Activated CD4-positive, alpha-beta memory T cell treated with anti-CD3 and anti-CD28 coated beads for 36 hours (primary cell): ENCODE measurements at regions of chr6 and their contacts with region 1.

Region 1: DNA sequence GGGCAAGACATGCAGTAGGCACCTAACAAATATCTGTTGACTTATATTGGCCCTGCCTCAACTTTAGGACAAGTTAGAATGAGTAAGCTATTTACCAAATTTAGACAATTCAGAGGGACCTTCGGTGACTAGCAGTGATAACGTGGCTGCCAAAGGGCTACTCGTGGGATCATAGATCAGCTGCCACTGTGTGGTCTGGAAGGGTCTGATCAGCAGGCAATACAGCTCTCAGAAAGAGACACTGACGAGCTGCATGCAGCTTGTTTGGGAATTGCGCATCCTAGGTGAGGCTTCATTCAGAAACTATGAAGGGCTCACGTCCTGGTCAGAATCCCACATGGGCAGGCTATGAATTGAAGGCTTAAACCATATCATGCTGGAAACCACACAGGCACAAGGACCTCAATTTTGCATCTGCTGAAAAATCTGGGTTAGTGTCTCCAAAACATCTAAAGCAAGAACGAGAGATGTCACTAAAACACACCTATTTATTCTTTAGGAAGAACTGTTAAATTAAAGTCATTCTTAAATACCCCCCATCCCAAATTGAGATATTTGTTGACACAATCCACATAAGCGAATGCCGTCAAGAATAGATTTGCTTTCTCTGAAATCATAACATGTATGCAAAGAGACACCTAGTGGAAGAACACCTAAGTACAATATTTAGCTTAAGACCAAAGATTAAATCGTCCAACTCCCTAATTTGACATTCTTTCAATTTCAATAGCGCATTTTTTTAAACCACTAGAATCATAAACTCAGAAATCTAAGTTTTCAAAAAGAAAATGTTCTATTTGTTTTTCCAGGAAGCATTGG is 79.6 kb downstream of the IPCEF1 start:
- DNase-seq: peak; percentile 11
- H3K4me3 Mint-ChIP-seq: peak overlapping the region; percentile 53
- H3K27ac Mint-ChIP-seq: peak overlapping the region; percentile 9
- H3K4me1 Mint-ChIP-seq: peaks cover 18% of the 10 kb centered on the region
- H3K27me3 Mint-ChIP-seq: peaks cover 3% of the 10 kb centered on the region

Region 2: DNA sequence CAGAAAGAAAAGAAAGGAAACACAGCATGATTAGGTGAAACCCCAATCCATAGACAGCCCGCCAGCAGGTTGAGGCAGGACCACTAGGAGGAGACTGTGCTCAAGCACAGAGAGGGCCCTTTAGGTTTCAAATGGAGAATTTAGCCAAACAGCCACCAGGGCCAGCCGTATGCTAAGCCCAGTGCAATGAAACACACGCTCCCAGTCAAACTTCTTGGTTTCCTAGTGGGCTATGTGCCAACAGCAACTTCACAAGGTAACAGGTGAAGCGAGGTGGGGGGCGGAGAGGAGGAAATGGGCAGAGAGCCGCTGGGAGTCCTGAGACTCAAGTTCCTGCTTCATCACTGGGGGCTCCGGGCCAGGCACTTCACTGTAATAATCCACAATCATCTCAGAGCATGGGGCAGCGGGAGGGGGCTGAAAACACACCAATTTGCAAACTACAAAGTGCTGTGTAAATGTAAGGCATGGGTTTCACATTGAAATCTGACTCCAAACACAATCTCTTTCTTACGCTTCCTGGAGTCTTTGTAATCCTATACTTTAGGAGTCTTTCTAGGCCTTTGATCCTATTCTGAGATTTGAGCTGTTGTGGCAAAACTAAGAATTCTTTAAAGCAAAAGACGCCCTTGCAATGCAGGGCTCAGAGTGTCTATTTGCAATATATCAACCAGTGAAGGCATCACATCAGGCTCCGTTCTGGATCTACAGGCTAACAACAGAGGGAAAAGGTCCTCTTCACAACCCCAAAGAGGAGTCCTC is 120.7 kb before region 1 on chr6:
- CTCF ChIA-PET with region 1: interaction called, 112 read pairs
- POLR2A ChIA-PET with region 1: interaction called, 6 read pairs
- intact Hi-C with region 1: loop called (anchors 1 kb)
- DNase-seq: peak; percentile 81
- H3K4me3 Mint-ChIP-seq: peak overlapping the region; percentile 60
- H3K27ac Mint-ChIP-seq: peak overlapping the region; percentile 68
- H3K4me1 Mint-ChIP-seq: peaks cover 49% of the 10 kb centered on the region
- H3K27me3 Mint-ChIP-seq: no peaks in the 10 kb centered on the region

Region 3: DNA sequence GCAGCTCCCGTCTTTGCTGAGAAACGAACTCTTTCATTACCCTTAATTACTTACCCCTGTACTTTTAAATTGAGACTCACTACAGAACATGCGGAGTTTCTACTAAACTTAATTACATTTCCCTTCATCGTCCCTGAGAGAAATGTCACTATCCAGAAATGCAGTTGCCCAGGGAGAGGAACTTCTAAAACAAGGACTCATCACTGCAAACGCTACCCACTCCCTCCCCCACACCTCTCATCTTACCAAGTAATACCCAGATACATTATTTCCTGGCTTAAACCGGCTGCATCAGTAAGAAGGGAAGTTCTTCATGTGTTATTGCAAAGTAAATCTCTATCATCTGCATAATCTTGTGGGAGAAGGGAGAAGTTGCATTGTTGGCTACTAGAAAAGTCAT is 58.7 kb before region 1 on chr6:
- CTCF ChIA-PET with region 1: interaction called, 10 read pairs
- POLR2A ChIA-PET with region 1: no interaction called
- intact Hi-C with region 1: no loop called
- DNase-seq: peak; percentile 57
- H3K4me3 Mint-ChIP-seq: peak overlapping the region; percentile 68
- H3K27ac Mint-ChIP-seq: peak overlapping the region; percentile 88
- H3K4me1 Mint-ChIP-seq: peaks cover 62% of the 10 kb centered on the region
- H3K27me3 Mint-ChIP-seq: no peaks in the 10 kb centered on the region

Region 4: DNA sequence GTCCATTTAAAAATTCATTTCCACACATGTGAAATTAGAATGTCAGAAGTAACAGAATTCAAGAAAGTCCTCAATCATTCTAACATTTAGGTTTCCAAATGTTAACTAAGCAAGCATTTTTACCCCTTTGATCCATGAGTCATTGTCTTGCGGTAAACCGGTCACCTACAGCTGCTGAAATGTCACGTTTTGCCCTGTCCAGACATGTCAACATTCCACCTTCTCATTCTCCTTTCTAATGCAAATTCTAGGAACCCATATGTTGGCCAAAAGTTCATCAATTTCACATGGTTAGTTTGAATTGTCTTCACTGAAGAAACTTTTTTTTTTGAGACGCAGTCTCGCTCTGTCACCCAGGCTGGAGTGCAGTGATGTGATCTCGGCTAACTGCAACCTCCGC is 37.6 kb before region 1 on chr6:
- CTCF ChIA-PET with region 1: interaction called, 28 read pairs
- POLR2A ChIA-PET with region 1: no interaction called
- intact Hi-C with region 1: no loop called
- DNase-seq: peak; percentile 56
- H3K4me3 Mint-ChIP-seq: peak overlapping the region; percentile 28
- H3K27ac Mint-ChIP-seq: peak overlapping the region; percentile 70
- H3K4me1 Mint-ChIP-seq: peaks cover 76% of the 10 kb centered on the region
- H3K27me3 Mint-ChIP-seq: no peaks in the 10 kb centered on the region

Region 5: GRCh38 chr6:154252678-154253077 is 24.3 kb before region 1 on chr6:
- CTCF ChIA-PET with region 1: interaction called, 11 read pairs
- POLR2A ChIA-PET with region 1: interaction called, 10 read pairs
- intact Hi-C with region 1: loop called (anchors 1 kb)
- DNase-seq: no peak
- H3K4me3 Mint-ChIP-seq: no peak overlapping the region
- H3K27ac Mint-ChIP-seq: peak overlapping the region; percentile 21
- H3K4me1 Mint-ChIP-seq: peaks cover 53% of the 10 kb centered on the region
- H3K27me3 Mint-ChIP-seq: no peaks in the 10 kb centered on the region

Region 6: DNA sequence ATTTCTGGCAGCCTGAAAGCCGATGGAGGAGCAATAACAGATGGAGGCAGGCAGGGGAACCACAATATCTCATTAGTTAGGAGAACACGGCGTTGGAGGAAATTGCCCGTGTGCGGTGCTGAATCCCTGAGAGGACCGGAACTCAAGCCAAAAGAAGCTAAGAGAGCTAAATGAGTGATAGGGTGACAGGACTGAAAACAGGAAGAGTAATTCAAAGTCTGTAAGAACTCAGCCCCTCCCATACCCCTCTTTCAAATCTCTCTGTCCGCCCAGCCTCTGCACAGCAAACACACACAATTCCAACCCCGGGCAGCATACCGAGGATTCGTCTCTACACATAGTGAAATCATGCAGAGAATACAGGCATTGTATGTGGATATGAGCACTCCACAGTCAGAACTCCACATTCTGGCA is 82.1 kb after region 1 on chr6:
- CTCF ChIA-PET with region 1: interaction called, 6 read pairs
- POLR2A ChIA-PET with region 1: no interaction called
- intact Hi-C with region 1: loop called (anchors 5 kb)
- DNase-seq: no peak
- H3K4me3 Mint-ChIP-seq: no peak overlapping the region
- H3K27ac Mint-ChIP-seq: no peak overlapping the region
- H3K4me1 Mint-ChIP-seq: peaks cover 17% of the 10 kb centered on the region
- H3K27me3 Mint-ChIP-seq: peaks cover 28% of the 10 kb centered on the region